Right ventricle myocardium inferior (tissue), 1 donor: ENCODE measurements at regions of chr1 and their contacts with region 1.

Region 1: GRCh38 chr1:156233426-156234127 is 8.4 kb upstream of the BGLAP start:
- DNase-seq: no peak
- ATAC-seq: no peak

Region 2: GRCh38 chr1:156212833-156213643 is 20.5 kb before region 1 on chr1 and contains the start of gene PMF1:
- intact Hi-C with region 1: no loop called
- DNase-seq: peak; percentile 98
- ATAC-seq: peak; percentile 97
- total RNA-seq, gene PMF1: 68.6 TPM

Region 3: GRCh38 chr1:156259805-156260204 is 26.2 kb after region 1 on chr1:
- intact Hi-C with region 1: loop called (anchors 2 kb)
- DNase-seq: no peak
- ATAC-seq: no peak

Region 4: GRCh38 chr1:156276966-156277381 is 43.4 kb after region 1 on chr1:
- intact Hi-C with region 1: loop called (anchors 5 kb)
- DNase-seq: no peak
- ATAC-seq: no peak

Region 5: DNA sequence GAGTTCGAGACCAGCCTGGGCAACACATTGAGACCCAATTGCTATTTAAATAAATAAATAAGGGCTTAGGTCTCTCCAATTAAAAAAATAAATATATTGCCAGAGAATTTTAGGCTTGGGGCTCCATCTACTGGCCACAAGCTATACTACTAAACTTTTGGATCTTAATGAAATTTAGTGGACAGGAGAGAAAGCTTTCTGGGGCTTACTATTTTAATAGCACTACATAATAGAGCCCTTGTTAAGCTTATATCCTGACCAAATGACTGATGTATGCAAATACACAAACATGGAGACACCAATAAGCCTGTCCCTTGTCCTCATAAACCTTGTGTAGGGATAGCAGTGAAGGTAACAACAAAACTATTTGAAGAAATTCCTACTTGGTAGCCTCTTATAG is 86.1 kb after region 1 on chr1:
- intact Hi-C with region 1: no loop called
- DNase-seq: no peak
- ATAC-seq: no peak